Cardiac septum (tissue), 1 donor: ENCODE measurements at regions of chr12 and their contacts with region 1.

Region 1: GRCh38 chr12:132887513-132888351 is at the start of gene CHFR:
- DNase-seq: peak; percentile 99
- total RNA-seq, gene CHFR: 22.5 TPM

Region 2: GRCh38 chr12:132761032-132761920 is 126.5 kb before region 1 on chr12 and contains the start of gene ANKLE2:
- intact Hi-C with region 1: loop called (anchors 5 kb)
- DNase-seq: no peak
- total RNA-seq, gene ANKLE2: 31.4 TPM

Region 3: DNA sequence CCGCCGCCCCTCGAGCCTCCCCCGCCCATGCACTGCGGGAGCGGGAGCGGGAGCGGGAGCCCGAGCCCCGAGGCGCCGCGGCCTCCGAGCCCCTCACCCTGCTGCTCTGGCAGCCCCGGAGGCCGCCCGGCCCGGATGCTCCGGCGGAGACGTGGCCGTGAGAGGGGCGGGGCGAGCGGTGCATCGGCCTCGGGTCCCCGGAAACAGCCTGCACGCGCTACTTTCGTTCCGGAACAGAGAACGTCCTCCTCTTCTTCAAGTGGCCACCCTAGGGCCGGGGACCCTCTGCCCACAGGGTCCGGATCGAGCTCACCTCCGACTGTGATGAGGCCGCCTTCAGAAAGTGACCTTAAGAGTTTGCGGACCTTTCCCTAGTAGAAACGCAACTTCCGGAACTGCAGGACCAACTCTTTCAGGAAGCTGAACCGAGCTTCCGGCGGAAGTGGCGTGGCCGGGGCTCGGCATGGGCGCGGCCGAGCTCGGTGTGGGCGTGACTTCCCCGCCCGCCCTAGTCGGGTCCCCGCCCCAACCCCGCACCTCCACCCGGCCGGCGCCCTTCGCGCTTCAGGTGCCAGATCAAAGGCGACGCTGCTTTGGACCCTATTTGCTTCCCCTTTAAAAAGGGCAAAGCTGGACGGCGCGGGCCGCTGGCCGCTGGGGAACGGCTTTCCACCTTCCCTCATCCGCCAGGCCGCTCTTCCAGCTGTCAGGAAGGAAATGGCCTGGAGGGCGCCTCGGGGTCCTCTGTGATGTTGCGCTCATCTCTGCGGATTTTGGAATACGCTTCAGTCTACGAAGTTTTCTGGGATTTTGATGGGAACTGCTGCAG is 58.8 kb before region 1 on chr12 and contains the start of gene GOLGA3:
- intact Hi-C with region 1: loop called (anchors 2 kb)
- DNase-seq: peak; percentile 96
- total RNA-seq, gene GOLGA3: 50.1 TPM

Region 4: DNA sequence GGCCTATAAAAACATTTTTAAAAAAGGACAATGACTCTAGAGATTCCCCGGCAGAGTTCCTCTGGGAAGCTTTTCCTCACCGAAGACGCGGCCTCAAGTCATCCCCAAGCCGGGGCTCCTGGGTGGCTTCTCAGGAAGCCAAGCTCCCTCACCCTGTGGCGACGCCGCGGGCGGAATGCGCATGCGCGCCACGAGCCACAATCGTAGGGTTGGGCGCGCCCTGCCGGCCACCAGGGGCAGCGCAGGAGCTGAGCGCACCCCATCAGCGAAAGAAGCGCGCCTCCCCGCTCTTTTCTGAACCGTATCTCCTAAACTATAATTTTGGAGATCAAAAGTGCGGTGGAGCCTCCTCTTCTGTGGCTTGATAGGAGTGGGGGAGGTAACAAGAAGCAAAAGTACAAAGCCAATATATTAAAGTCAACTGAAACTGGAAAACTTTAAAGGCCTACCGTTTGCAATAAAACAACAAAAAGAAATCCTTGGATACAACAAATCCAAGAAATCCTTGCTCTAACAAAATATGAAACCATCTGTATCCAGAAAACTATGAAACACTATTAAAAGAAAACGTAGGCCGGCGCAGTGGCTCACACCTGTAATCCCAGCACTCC is 17.1 kb after region 1 on chr12:
- intact Hi-C with region 1: loop called (anchors 2 kb)
- DNase-seq: peak; percentile 89

Region 5: DNA sequence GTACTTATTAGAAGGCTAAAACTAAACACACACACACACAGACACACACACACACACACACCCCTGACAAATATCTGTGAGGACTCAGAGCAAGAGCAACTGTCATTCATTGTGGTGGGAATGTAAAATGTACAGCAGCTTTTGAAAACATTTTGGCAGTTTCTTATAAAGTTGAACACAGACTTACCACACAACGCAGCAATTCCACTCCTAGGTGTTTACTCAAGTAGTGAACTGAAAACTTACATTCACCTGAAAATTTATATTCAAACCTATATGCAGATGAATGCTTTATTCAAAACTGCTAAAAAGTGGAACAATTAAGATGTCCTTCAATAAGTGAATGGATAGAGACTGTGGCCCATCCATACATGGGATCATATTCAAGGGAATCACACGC is 49.7 kb after region 1 on chr12:
- intact Hi-C with region 1: no loop called
- DNase-seq: no peak